Endothelial cell of umbilical vein (primary cell): ENCODE measurements at regions of chrX and their contacts with region 1.

Region 1: GRCh38 chrX:43750248-43750676 is 94.2 kb downstream of the MAOA start:
- DNase-seq: peak; percentile 57
- H3K4me3 ChIP-seq: no peak overlapping the region
- H3K27ac ChIP-seq: no peak overlapping the region
- H3K4me1 ChIP-seq: no peaks in the 10 kb centered on the region
- H3K27me3 ChIP-seq: no peaks in the 10 kb centered on the region
- CTCF ChIP-seq: peak; percentile 17 to 20
- POLR2A ChIP-seq: no peak

Region 2: GRCh38 chrX:43349363-43349762 is 400.9 kb before region 1 on chrX:
- CTCF ChIA-PET with region 1: interaction called, 13 read pairs
- POLR2A ChIA-PET with region 1: no interaction called
- dilution Hi-C with region 1: no loop called
- intact Hi-C with region 1: loop called (anchors 1 kb)
- DNase-seq: peak; percentile 30
- H3K4me3 ChIP-seq: no peak overlapping the region
- H3K27ac ChIP-seq: no peak overlapping the region
- H3K4me1 ChIP-seq: no peaks in the 10 kb centered on the region
- H3K27me3 ChIP-seq: no peaks in the 10 kb centered on the region
- CTCF ChIP-seq: peak; percentile 40 to 61
- POLR2A ChIP-seq: no peak

Region 3: GRCh38 chrX:43564953-43565352 is 185.3 kb before region 1 on chrX:
- CTCF ChIA-PET with region 1: interaction called, 81 read pairs
- POLR2A ChIA-PET with region 1: no interaction called
- dilution Hi-C with region 1: no loop called
- intact Hi-C with region 1: no loop called
- DNase-seq: no peak
- H3K4me3 ChIP-seq: no peak overlapping the region
- H3K27ac ChIP-seq: no peak overlapping the region
- H3K4me1 ChIP-seq: no peaks in the 10 kb centered on the region
- H3K27me3 ChIP-seq: no peaks in the 10 kb centered on the region
- CTCF ChIP-seq: no peak
- POLR2A ChIP-seq: no peak

Region 4: DNA sequence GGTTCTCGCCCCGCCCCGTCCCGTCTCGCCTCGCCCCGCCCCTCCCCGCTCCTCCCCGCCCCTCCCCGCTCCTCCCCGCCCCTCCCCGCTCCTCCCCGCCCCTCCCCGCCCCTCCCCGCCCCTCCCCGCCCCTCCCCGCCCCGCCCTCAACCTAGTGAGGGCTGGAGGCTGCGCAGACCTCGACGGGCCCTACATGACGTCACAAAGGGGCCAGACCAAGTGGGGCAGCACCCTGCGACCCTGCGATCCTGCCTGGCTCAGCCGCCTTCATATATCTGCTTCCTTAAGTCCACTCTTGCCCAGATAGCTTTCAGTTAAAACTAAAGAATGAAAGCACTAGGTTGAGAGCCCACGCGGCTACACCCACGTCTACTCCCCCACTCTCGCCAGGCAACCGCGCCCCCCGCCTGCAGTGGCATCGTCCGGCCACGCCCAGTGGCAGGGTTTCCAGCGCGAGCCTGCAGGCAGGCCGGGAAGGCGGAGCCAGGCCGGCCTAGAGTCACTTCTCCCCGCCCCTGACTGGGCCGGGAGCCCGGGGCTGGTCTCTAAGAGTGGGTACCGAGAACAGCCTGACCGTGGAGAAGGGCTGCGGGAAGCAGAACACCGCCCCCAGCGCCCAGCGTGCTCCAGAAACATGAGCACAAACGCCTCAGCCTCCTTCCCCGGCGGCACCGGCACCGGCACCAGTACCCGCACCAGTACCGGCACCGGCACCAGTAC is 95.7 kb before region 1 on chrX:
- CTCF ChIA-PET with region 1: interaction called, 20 read pairs
- POLR2A ChIA-PET with region 1: no interaction called
- dilution Hi-C with region 1: no loop called
- intact Hi-C with region 1: loop called (anchors 1 kb)
- DNase-seq: peak; percentile 92
- H3K4me3 ChIP-seq: peak overlapping the region; percentile 42 to 76 (median 74)
- H3K27ac ChIP-seq: peak overlapping the region; percentile 95
- H3K4me1 ChIP-seq: no peaks in the 10 kb centered on the region
- H3K27me3 ChIP-seq: no peaks in the 10 kb centered on the region
- CTCF ChIP-seq: peak; percentile 9 to 41
- POLR2A ChIP-seq: peak; percentile 52

Region 5: DNA sequence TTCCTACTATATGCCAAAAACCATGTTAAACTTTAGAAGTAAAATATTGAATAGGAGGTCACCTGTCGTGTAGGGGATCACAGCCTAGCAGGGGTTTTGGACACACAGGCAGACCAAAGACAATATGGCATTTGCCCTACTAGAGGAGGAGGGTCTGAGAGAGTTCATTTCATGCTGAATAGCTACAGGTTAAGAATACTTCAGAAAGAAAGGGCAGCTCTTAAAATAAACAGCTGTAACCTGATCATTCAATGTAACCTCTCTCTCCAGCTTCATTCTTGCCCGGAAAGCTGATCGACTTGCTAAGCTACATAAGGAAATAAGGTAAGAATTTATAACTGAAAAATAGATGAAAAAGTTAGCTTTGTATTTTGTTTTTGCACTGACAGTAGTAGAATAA is 14.3 kb before region 1 on chrX:
- CTCF ChIA-PET with region 1: interaction called, 11 read pairs
- POLR2A ChIA-PET with region 1: no interaction called
- dilution Hi-C with region 1: no loop called
- intact Hi-C with region 1: no loop called
- DNase-seq: no peak
- H3K4me3 ChIP-seq: no peak overlapping the region
- H3K27ac ChIP-seq: no peak overlapping the region
- H3K4me1 ChIP-seq: no peaks in the 10 kb centered on the region
- H3K27me3 ChIP-seq: no peaks in the 10 kb centered on the region
- CTCF ChIP-seq: no peak
- POLR2A ChIP-seq: no peak